Heart left ventricle (tissue), 16 donors: ENCODE measurements at regions of chr6 and their contacts with region 1.

Region 1: GRCh38 chr6:26581164-26581915 is 15.4 kb upstream of the ABT1 start:
- DNase-seq: no peak
- ATAC-seq: no peak
- H3K4me3 ChIP-seq: no peak overlapping the region
- H3K27ac ChIP-seq: no peak overlapping the region
- H3K4me1 ChIP-seq: peaks cover 0 to 15% (median 0%) of the 10 kb centered on the region in 12 donors
- H3K27me3 ChIP-seq: peaks cover 0 to 43% (median 12%) of the 10 kb centered on the region in 9 donors
- CTCF ChIP-seq: no peak
- POLR2A ChIP-seq: no peak

Region 2: GRCh38 chr6:26336355-26337198 is 244.8 kb before region 1 on chr6:
- intact Hi-C with region 1: loop called in 1 of 10 experiments (anchors 5 kb)
- DNase-seq: no peak
- ATAC-seq: no peak
- H3K4me3 ChIP-seq: no peak overlapping the region
- H3K27ac ChIP-seq: no peak overlapping the region
- H3K4me1 ChIP-seq: peaks cover 0 to 22% (median 0%) of the 10 kb centered on the region in 12 donors
- H3K27me3 ChIP-seq: peaks cover 10 to 38% (median 27%) of the 10 kb centered on the region in 9 donors
- CTCF ChIP-seq: no peak
- POLR2A ChIP-seq: no peak

Region 3: DNA sequence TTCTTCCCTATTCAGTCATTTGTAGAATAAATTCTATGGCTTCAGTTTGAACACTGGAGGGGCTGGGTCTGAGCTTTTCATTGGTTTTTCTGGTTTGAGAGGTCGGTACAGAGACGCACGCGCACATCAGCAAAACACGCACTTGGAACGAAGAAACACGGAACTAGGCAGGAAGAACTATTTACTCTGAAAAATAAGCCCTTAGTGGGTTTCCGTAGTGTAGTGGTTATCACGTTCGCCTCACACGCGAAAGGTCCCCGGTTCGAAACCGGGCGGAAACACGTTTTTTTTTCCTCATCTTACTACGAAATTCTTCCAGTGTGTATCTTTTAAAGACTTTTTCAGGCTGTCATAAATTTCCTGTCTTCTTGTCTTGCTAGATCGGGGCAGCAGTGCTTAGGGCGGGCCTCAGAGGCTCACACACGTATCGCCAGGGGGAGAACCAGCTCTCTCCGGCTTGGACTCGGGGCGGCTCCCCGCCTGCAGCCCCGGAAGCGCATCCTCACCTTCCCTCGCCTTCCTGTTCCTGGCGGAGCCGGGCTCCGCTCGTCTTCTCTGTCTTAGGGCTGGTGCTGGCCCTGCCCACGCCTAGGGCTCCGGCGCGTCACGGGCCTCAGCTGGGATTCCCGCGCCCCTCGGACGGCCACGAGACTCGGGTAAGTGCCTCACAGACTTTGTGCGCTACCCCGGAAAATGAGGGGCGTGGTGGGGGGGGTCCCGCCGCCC is 43.3 kb before region 1 on chr6 and contains the start of gene HMGN4:
- intact Hi-C with region 1: no loop called
- DNase-seq: peak; percentile 82 to 91 (median 87)
- ATAC-seq: peak; percentile 86 to 90 (median 90)
- H3K4me3 ChIP-seq: peak within 1 kb of the TSS; percentile 58 to 94 (median 76)
- H3K27ac ChIP-seq: peak within 1 kb of the TSS; percentile 75 to 96 (median 92)
- H3K4me1 ChIP-seq: peaks cover 0 to 48% (median 25%) of the 10 kb centered on the region in 12 donors
- H3K27me3 ChIP-seq: no peaks in the 10 kb centered on the region
- CTCF ChIP-seq: peak in 3 of 12 donors; percentile 19 to 40 (median 30)
- POLR2A ChIP-seq: peak in 1 of 2 donors; percentile 56
- total RNA-seq, gene HMGN4: 22.4 to 34.7 (median 32.1) TPM